Psoas muscle (tissue), 8 donors: ENCODE measurements at regions of chr5 and their contacts with region 1.

Region 1: DNA sequence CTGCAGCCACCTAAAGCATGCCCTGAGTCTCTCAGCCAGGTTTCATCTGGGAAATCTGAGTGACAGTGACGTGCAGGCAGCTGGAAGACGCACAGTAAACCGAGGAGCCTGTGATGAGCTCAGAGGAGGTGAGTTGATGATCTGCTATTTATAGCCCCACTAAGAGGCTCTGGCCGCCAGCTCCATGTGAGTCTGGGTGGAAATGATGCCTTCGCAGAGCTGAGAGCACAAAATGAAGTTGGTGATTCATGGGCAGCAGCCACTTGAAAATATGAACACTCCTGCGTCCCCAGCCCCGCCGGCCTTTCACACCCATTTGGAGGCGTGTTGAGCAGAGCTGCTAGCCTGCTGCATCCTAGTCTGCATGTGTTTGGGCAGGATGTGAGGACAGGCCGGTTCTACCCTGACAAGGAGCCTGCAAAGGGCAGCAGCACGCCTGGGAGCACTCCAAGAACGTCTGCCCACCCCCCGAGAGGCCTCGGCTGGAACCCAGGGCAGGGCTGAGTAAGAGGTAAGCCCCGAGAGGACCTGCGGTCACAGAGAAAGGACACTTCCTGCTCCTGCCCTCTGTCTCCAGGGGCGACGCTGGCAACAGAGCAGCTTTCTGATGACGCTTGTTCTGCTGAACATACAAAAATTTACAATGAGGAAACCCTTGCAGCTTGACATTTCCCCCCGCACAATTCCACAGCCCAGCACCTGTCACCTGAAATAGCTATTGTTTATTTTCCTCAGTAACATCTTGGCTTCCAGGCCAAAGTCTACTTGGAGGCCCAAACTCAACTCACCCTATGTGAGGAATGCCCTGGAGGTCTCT is 25.1 kb upstream of the CDKN2AIPNL start:
- DNase-seq: peak; percentile 84 to 89
- ATAC-seq: peak; percentile 77 to 89 (median 81)
- H3K4me3 ChIP-seq: peak overlapping the region; percentile 42
- H3K27ac ChIP-seq: peak overlapping the region; percentile 98
- H3K4me1 ChIP-seq: peaks cover 68% of the 10 kb centered on the region
- H3K27me3 ChIP-seq: no peaks in the 10 kb centered on the region
- CTCF ChIP-seq: no peak

Region 2: GRCh38 chr5:134370871-134371833 is 65.6 kb before region 1 on chr5 and contains the start of gene UBE2B:
- intact Hi-C with region 1: loop called in 1 of 2 experiments (anchors 5 kb)
- DNase-seq: peak; percentile 97 to 98
- ATAC-seq: peak; percentile 82 to 87 (median 84)
- H3K4me3 ChIP-seq: peak within 1 kb of the TSS; percentile 100
- H3K27ac ChIP-seq: peak within 1 kb of the TSS; percentile 100
- H3K4me1 ChIP-seq: peaks cover 40% of the 10 kb centered on the region
- H3K27me3 ChIP-seq: no peaks in the 10 kb centered on the region
- CTCF ChIP-seq: no peak
- total RNA-seq, gene UBE2B: 178 to 296 (median 222) TPM

Region 3: GRCh38 chr5:134511788-134512650 is 75.3 kb after region 1 on chr5:
- intact Hi-C with region 1: loop called in 1 of 2 experiments (anchors 5 kb)
- DNase-seq: peak; percentile 89 to 94
- ATAC-seq: peak; percentile 88 to 91 (median 90)
- H3K4me3 ChIP-seq: no peak overlapping the region
- H3K27ac ChIP-seq: peak overlapping the region; percentile 76
- H3K4me1 ChIP-seq: peaks cover 41% of the 10 kb centered on the region
- H3K27me3 ChIP-seq: no peaks in the 10 kb centered on the region
- CTCF ChIP-seq: peak; percentile 41